ENCODE measurements at regions of chr3 and their contacts with region 1.

Region 1: GRCh38 chr3:112013058-112013783 is 14.5 kb downstream of the TAGLN3 start:
- DNase-seq: peak; percentile 67
- ATAC-seq: peak; percentile 79 to 86

Region 2: DNA sequence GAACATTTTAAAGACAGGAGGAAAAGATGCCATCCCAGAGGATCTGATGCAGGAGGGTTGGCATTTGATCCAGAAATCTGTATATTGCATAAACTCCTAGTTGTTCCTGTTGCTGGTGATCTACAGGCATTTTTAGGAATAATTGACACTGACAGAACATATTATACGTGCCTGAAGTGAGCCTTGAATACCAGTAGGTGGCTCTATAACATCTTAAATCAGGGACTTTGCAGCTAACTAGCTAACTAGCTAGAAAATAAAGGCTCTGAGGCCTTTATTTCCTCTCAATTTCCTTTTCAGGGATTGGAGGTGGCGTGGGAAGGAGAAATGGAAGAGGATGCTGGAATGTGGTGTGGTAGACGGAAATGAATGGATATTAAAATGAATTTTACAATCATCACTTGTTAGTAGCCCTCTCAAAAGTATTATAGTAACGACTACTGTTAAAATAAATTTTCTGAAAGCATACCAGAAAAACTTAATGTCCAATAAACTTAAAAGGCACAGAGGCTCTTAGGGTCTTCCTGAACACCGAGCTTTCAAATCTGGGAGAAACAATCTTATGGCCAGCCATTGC is 344.2 kb before region 1 on chr3:
- intact Hi-C with region 1: loop called in 1 of 2 experiments (anchors 2 kb)
- DNase-seq: no peak
- ATAC-seq: peak; percentile 86 to 87

Region 3: GRCh38 chr3:111717601-111718000 is 295.6 kb before region 1 on chr3:
- intact Hi-C with region 1: loop called in 1 of 2 experiments (anchors 2 kb)
- DNase-seq: peak; percentile 76
- ATAC-seq: peak; percentile 92 to 93

Region 4: GRCh38 chr3:111803123-111803593 is 210.1 kb before region 1 on chr3:
- intact Hi-C with region 1: no loop called
- DNase-seq: peak; percentile 80
- ATAC-seq: peak; percentile 84 to 92

Region 5: GRCh38 chr3:111967651-111968274 is 45.5 kb before region 1 on chr3:
- intact Hi-C with region 1: no loop called
- DNase-seq: peak; percentile 85
- ATAC-seq: peak; percentile 81 to 94